Transverse colon (tissue), 4 donors: ENCODE measurements at regions of chr4 and their contacts with region 1.

Region 1: DNA sequence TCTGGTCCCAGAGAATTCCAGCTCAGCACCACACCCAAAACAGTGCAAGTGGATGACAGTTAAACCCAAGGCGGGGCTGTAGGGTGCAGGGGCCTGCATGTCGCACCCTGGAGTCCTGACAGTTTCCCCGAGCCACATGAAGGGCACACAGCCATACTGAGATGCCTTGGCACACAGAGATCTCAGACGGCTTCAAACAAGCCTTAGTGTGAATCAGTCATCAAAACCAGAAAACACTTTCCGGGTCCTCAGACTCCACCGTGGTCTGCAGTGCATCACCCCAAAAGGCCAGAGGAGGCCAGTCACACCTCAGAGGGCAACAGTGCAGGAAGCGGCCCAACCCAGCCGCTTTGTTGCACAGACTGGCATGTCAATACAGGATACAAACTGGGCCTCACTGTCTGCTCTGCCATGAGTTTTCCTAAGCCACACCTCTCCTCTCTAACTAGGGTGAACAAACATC is 64.6 kb upstream of the ENPP6 start:
- DNase-seq: peak; percentile 65
- H3K4me3 ChIP-seq: no peak overlapping the region
- H3K27ac ChIP-seq: peak overlapping the region; percentile 63 to 81 (median 70)
- H3K4me1 ChIP-seq: peaks cover 9 to 30% (median 15%) of the 10 kb centered on the region in 4 donors
- H3K27me3 ChIP-seq: no peaks in the 10 kb centered on the region
- CTCF ChIP-seq: peak in 4 of 5 experiments; percentile 13 to 57 (median 33)
- EP300 ChIP-seq: no peak
- POLR2A ChIP-seq: no peak

Region 2: DNA sequence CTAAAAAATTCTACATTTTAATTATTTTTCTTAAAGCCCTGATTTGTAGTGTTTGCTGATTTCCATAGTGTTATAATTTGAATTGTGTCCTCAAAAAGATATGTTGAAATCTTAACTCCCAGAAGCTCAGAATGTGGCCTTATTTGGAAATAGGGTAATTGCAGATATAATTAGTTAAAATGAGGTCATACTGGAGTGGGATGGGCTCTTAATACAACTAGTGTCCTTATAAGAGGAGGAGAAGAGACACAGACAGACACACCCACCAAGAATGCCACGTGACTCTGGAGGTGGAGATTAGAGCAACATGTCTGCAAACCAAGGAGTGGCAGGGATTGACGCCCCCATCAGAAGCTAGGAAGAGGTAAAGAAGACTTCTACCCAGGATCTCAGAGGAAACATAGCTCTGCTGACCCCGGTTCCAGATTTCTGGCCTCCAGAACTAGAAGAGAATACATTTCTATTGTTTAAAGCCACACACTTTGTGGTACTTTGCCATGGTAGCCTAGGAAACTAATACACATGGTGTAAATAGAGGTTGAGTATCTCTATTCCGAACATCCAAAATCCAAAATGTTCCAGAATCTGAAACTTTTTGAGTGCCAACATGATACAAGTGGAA is 262.6 kb after region 1 on chr4:
- in situ Hi-C with region 1: no loop called
- intact Hi-C with region 1: loop called (anchors 10 kb)
- DNase-seq: no peak
- H3K4me3 ChIP-seq: no peak overlapping the region
- H3K27ac ChIP-seq: no peak overlapping the region
- H3K4me1 ChIP-seq: peaks cover 0 to 14% (median 2%) of the 10 kb centered on the region in 4 donors
- H3K27me3 ChIP-seq: no peaks in the 10 kb centered on the region
- CTCF ChIP-seq: no peak
- EP300 ChIP-seq: no peak
- POLR2A ChIP-seq: no peak